ENCODE measurements at regions of chr9 and their contacts with region 1.

Region 1: DNA sequence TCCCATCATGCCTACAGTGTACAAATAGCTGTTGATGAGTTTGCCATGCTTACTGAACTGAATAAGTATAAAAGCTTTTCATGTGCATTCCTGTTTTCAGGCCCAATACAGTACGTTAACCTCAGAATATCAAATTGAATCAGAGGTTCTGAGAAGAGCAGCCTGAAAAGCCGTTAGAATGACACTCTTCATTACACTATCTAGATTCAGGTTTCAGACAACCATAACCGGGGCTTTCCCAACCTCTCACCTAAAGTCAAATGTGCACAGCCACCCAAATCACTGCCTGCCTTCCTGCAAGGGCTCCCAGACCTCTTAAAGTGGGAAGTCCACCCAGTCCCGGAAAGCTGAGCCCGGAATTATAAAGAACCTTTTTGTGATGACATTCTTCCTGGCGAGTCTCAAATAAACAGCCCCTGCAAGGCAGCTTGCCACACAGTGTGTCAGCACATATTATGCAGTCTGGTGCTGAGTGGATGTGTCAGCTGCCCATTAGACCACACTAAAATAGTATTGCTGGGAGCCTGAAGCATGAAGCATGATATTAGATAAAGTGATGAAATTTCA is 245.8 kb downstream of the TLE4 start:
- DNase-seq: no peak
- H3K4me3 ChIP-seq: no peak overlapping the region
- H3K27ac ChIP-seq: no peak overlapping the region
- H3K4me1 ChIP-seq: peaks cover 7% of the 10 kb centered on the region
- H3K27me3 ChIP-seq: no peaks in the 10 kb centered on the region
- CTCF ChIP-seq: no peak
- EP300 ChIP-seq: no peak
- POLR2A ChIP-seq: no peak

Region 2: GRCh38 chr9:79571309-79572031 is 246.1 kb before region 1 on chr9 and contains the start of gene TLE4:
- intact Hi-C with region 1: loop called in 2 of 4 experiments (anchors 10 kb)
- DNase-seq: peak; percentile 99 to 100 (median 99)
- H3K4me3 ChIP-seq: peak within 1 kb of the TSS; percentile 91
- H3K27ac ChIP-seq: peak within 1 kb of the TSS; percentile 94
- H3K4me1 ChIP-seq: no peaks in the 10 kb centered on the region
- H3K27me3 ChIP-seq: no peaks in the 10 kb centered on the region
- CTCF ChIP-seq: no peak
- EP300 ChIP-seq: peak; percentile 39
- POLR2A ChIP-seq: peak; percentile 94
- total RNA-seq, gene TLE4: 50.3 to 67.5 (median 56.1) TPM

Measured in ovary (tissue), 10 donors.